Esophagus muscularis mucosa (tissue), 4 donors: ENCODE measurements at regions of chr17 and their contacts with region 1.

Region 1: DNA sequence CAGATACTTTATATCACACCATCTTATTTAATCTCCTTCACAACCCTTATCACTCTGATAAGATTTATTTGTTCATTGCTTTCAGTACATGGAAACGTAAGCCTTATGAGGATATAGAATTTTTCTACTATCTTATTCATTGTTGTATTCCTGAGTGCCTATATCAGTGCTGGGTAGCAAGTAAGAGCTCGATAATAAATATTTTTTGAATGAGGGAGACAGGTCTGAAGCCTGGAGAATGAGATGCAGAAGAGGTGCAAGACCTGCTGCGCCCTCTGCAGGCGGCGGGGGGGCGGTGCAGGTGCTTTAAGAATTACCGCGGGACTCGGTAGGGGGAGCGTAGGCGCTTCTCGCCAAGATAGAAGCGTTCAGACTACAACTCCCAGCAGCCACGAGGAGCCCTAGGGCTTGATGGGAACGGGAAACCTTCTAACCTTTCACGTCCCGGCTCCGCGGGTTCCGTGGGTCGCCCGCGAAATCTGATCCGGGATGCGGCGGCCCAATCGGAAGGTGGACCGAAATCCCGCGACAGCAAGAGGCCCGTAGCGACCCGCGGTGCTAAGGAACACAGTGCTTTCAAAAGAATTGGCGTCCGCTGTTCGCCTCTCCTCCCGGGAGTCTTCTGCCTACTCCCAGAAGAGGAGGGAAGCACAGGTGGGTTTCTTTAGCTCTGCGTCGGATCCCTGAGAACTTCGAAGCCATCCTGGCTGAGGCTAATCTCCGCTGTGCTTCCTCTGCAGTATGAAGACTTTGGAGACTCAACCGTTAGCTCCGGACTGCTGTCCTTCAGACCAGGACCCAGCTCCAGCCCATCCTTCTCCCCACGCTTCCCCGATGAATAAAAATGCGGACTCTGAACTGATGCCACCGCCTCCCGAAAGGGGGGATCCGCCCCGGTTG is at the start of gene WRAP53:
- DNase-seq: peak; percentile 99
- H3K4me3 ChIP-seq: peak within 1 kb of the TSS; percentile 68 to 87 (median 81)
- H3K27ac ChIP-seq: peak within 1 kb of the TSS; percentile 90 to 96 (median 92)
- H3K4me1 ChIP-seq: peaks cover 22 to 40% (median 37%) of the 10 kb centered on the region in 4 donors
- H3K27me3 ChIP-seq: no peaks in the 10 kb centered on the region
- CTCF ChIP-seq: peak; percentile 97 to 100 (median 99)
- EP300 ChIP-seq: no peak
- POLR2A ChIP-seq: no peak
- total RNA-seq, gene WRAP53: 3.3 to 6.4 (median 3.8) TPM

Region 2: DNA sequence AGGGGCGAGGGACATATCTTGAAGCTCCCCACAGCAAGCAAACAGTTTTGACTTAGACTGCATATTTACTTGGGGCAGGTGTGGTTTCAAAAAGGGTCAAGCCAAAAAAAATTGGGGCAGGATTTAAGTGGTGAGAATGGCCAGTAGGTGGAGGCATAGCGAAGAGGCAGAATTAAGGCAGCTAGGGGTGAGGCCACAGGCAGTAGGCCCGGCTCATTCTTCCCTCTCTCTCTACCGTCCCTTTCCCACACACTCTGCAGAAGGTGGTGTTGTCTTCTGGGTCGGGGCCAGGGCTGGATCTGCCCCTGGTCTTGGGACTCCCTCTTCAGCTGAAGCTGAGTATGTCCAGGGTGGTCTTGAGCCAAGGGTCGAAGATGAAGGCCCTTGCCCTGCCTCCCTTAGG is 55.7 kb before region 1 on chr17:
- intact Hi-C with region 1: loop called (anchors 2 kb)
- DNase-seq: no peak
- H3K4me3 ChIP-seq: no peak overlapping the region
- H3K27ac ChIP-seq: no peak overlapping the region
- H3K4me1 ChIP-seq: peaks cover 0 to 10% (median 7%) of the 10 kb centered on the region in 4 donors
- H3K27me3 ChIP-seq: no peaks in the 10 kb centered on the region
- CTCF ChIP-seq: peak; percentile 40 to 52 (median 50)
- EP300 ChIP-seq: no peak
- POLR2A ChIP-seq: no peak

Region 3: DNA sequence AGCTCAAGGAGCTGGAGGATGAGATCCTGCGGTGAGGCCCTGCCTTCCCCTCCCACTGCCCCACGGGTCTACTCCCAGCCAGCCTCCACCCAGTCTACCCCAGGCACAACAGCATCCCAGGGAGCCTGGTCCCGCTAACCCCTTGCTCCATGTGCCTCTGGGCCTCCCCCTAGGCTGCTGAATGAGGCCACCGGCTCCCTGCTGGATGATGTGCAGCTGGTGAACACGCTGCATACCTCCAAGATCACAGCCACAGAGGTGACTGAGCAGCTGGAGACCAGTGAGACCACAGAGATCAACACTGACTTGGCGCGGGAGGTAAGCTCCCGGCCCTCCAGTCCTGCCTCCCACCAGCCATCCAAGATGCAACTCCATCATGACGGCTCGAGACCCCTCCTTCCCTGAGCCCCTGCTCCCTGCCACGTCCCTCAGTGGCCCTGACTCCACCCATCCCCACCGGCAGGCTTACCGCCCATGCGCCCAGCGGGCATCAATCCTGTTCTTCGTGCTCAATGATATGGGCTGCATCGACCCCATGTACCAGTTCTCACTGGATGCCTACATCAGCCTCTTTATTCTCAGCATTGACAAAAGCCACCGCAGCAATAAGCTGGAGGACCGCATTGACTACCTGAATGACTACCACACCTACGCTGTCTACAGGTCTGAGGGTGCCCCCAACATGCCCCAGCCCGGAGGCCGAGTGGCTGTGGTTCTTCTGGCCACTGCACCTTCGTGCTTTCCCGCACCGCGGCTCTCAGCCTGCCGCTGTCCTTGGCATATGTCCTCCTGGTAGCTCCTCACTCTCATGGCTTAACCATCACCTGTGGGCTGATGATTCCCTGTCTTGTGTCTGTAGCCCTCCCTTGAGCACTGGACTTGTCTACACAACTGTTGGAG is 130.8 kb after region 1 on chr17:
- intact Hi-C with region 1: no loop called
- DNase-seq: no peak
- H3K4me3 ChIP-seq: no peak overlapping the region
- H3K27ac ChIP-seq: no peak overlapping the region
- H3K4me1 ChIP-seq: no peaks in the 10 kb centered on the region
- H3K27me3 ChIP-seq: peaks cover 0 to 6% (median 0%) of the 10 kb centered on the region in 4 donors
- CTCF ChIP-seq: no peak
- EP300 ChIP-seq: no peak
- POLR2A ChIP-seq: no peak